ENCODE measurements at regions of chr2 and their contacts with region 1.

Region 1: DNA sequence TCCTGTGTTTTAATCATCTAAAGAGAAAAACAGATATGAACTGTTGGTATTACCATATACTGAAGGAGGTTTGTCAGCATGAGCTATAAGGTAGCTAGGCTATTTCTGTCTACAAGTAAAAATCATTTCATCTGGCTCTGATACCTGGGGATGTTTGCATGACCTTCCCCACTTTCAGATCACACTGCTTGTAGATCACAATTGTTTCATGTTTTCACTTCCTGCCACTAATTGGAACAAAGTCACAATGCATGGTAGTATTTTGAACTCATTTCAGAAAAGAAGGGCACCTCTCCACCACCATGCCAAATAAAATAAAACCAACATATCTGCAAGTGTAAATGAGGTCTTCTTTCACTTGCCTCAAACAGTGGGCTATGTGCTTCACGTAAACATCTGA is 37.8 kb downstream of the NYAP2 start:
- DNase-seq: no peak
- H3K4me3 ChIP-seq: no peak overlapping the region
- CTCF ChIP-seq: no peak
- POLR2A ChIP-seq: no peak

Region 2: GRCh38 chr2:226179012-226179411 is 741.7 kb after region 1 on chr2:
- intact Hi-C with region 1: loop called (anchors 5 kb)
- DNase-seq: no peak
- H3K4me3 ChIP-seq: no peak overlapping the region
- CTCF ChIP-seq: no peak
- POLR2A ChIP-seq: no peak

Measured in lower leg skin (tissue), 4 donors.